ENCODE measurements at regions of chr15 and their contacts with region 1.

Region 1: GRCh38 chr15:62896978-62897647 is 145.4 kb upstream of the TPM1 start:
- DNase-seq: peak; percentile 88
- ATAC-seq: peak; percentile 77

Region 2: GRCh38 chr15:62782039-62782791 is 114.9 kb before region 1 on chr15:
- intact Hi-C with region 1: loop called (anchors 5 kb)
- DNase-seq: peak; percentile 80
- ATAC-seq: peak; percentile 92

Region 3: DNA sequence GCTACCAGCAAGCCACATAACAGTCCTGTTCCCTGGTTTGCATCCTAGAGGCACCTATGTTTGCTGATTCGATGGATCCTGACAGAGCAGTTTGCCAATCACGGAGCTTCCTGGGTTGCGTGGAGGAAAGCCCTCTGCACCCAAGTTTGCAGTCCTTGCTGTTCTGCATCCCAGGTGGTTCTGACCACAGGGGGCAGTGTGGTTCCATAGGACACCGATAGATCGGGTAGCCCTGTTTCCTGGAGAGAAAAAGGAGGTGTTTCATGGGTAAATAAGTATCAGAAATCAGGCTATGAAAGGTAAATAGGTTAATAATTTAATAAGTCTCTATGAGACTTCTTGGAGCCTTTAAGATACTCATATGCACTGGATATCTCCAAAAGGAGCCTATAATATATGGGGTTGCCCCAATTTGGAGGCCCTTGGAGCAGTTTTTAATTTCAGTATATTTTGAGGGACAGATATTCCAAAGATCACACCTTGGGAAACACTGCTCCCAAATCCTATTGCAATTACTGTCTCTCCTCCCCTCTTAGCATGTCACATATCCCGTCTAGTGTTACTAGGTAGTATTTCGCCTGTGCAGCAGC is 49.1 kb before region 1 on chr15:
- intact Hi-C with region 1: loop called (anchors 5 kb)
- DNase-seq: peak; percentile 80
- ATAC-seq: peak; percentile 73

Region 4: GRCh38 chr15:62879770-62880169 is 17.3 kb before region 1 on chr15:
- intact Hi-C with region 1: loop called (anchors 2 kb)
- DNase-seq: no peak
- ATAC-seq: no peak

Region 5: GRCh38 chr15:62958528-62959363 is 61.6 kb after region 1 on chr15:
- intact Hi-C with region 1: loop called (anchors 5 kb)
- DNase-seq: no peak
- ATAC-seq: peak; percentile 81

Region 6: GRCh38 chr15:62995047-62995674 is 98.0 kb after region 1 on chr15:
- intact Hi-C with region 1: loop called (anchors 5 kb)
- DNase-seq: no peak
- ATAC-seq: no peak